Panc1 (cell line): ENCODE measurements at regions of chr17 and their contacts with region 1.

Region 1: GRCh38 chr17:15109608-15110007 is 155.5 kb downstream of the PMP22 start:
- DNase-seq: no peak
- ATAC-seq: no peak
- H3K4me3 ChIP-seq: no peak overlapping the region
- H3K27ac ChIP-seq: no peak overlapping the region
- H3K4me1 ChIP-seq: no peaks in the 10 kb centered on the region
- H3K27me3 ChIP-seq: no peaks in the 10 kb centered on the region
- CTCF ChIP-seq: no peak

Region 2: GRCh38 chr17:14986127-14986526 is 123.5 kb before region 1 on chr17:
- CTCF ChIA-PET with region 1: no interaction called
- POLR2A ChIA-PET with region 1: no interaction called
- in situ Hi-C with region 1: no loop called
- intact Hi-C with region 1: no loop called
- DNase-seq: no peak
- ATAC-seq: no peak
- H3K4me3 ChIP-seq: no peak overlapping the region
- H3K27ac ChIP-seq: no peak overlapping the region
- H3K4me1 ChIP-seq: no peaks in the 10 kb centered on the region
- H3K27me3 ChIP-seq: no peaks in the 10 kb centered on the region
- CTCF ChIP-seq: no peak

Region 3: DNA sequence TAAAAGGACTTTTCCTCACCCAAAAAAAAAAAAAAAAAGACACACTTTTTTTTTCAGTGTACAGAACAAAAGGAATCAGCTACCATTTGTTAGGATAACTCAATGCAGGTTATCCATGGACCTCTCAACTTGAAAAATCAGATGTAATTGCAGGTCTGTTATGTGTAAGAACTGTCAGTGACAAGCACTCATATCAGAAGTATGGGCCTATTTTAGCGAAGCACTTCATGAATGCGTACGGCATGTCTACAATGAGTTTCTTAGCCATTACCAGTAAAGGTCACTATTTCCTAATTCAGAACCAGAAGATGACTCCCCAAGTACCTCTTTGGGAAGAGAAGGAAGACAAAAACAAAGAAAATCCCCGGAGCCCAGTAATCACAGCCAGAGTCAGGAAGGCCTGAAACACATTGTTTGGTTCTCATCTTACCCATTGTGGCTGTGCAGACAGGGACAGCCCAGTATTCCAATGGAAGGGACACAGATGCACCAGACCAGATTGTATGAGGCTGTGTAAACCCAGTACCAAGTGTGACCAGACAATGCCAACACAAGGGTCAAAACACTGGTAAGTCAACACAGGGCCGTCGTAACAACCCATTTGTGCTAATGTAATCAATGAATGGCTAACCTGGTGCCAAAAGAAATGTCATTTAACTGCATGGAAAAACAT is 32.5 kb before region 1 on chr17:
- CTCF ChIA-PET with region 1: no interaction called
- POLR2A ChIA-PET with region 1: no interaction called
- in situ Hi-C with region 1: no loop called
- intact Hi-C with region 1: loop called (anchors 2 kb)
- DNase-seq: no peak
- ATAC-seq: no peak
- H3K4me3 ChIP-seq: no peak overlapping the region
- H3K27ac ChIP-seq: no peak overlapping the region
- H3K4me1 ChIP-seq: no peaks in the 10 kb centered on the region
- H3K27me3 ChIP-seq: no peaks in the 10 kb centered on the region
- CTCF ChIP-seq: no peak

Region 4: GRCh38 chr17:15091825-15092224 is 17.8 kb before region 1 on chr17:
- CTCF ChIA-PET with region 1: no interaction called
- POLR2A ChIA-PET with region 1: no interaction called
- in situ Hi-C with region 1: no loop called
- intact Hi-C with region 1: no loop called
- DNase-seq: no peak
- ATAC-seq: no peak
- H3K4me3 ChIP-seq: no peak overlapping the region
- H3K27ac ChIP-seq: no peak overlapping the region
- H3K4me1 ChIP-seq: no peaks in the 10 kb centered on the region
- H3K27me3 ChIP-seq: no peaks in the 10 kb centered on the region; the same call in 1 of the 2 replicates
- CTCF ChIP-seq: peak; percentile 46

Region 5: DNA sequence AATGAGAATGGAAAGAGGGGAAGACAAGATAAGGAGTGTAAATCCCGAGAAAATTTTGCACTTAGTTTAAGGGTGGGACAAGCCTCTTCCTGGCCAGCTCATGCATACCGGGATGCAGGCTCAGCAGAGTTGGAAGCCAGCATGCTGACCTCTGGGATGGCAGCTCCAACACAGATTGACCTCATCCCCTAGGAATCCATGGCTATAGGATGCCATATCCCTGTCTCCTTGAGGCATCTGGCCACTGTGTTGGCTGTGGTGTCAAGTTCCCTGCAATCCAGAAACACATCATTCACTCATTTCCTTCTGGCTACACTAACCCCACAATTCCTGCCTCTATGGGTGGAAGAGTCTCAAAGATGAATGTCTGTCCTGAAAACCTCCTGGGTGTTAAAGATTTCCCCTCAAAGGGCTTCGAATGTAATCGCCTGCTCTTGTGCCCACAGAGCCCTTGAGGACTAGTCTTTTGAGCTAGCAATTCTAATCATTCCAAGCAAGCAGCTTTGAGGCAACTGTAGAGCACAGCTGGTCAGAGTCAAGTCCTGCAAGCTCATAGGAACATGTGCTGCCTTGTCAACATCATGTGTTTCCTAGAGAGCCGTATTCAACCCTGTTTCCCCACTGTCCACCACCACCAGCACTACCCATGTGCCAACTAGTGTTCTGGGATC is 14.1 kb after region 1 on chr17:
- CTCF ChIA-PET with region 1: no interaction called
- POLR2A ChIA-PET with region 1: no interaction called
- in situ Hi-C with region 1: no loop called
- intact Hi-C with region 1: no loop called
- DNase-seq: no peak
- ATAC-seq: no peak
- H3K4me3 ChIP-seq: no peak overlapping the region
- H3K27ac ChIP-seq: no peak overlapping the region
- H3K4me1 ChIP-seq: no peaks in the 10 kb centered on the region
- H3K27me3 ChIP-seq: no peaks in the 10 kb centered on the region
- CTCF ChIP-seq: no peak